ENCODE measurements at regions of chr2 and their contacts with region 1.

Region 1: GRCh38 chr2:230614913-230615332 is 97.7 kb upstream of the CAB39 start:
- DNase-seq: no peak
- ATAC-seq: no peak
- H3K4me3 ChIP-seq: no peak overlapping the region
- H3K27ac ChIP-seq: no peak overlapping the region
- H3K4me1 ChIP-seq: peaks cover 0 to 6% (median 0%) of the 10 kb centered on the region in 9 donors
- H3K27me3 ChIP-seq: peaks cover 0 to 3% (median 0%) of the 10 kb centered on the region in 7 donors
- CTCF ChIP-seq: no peak

Region 2: DNA sequence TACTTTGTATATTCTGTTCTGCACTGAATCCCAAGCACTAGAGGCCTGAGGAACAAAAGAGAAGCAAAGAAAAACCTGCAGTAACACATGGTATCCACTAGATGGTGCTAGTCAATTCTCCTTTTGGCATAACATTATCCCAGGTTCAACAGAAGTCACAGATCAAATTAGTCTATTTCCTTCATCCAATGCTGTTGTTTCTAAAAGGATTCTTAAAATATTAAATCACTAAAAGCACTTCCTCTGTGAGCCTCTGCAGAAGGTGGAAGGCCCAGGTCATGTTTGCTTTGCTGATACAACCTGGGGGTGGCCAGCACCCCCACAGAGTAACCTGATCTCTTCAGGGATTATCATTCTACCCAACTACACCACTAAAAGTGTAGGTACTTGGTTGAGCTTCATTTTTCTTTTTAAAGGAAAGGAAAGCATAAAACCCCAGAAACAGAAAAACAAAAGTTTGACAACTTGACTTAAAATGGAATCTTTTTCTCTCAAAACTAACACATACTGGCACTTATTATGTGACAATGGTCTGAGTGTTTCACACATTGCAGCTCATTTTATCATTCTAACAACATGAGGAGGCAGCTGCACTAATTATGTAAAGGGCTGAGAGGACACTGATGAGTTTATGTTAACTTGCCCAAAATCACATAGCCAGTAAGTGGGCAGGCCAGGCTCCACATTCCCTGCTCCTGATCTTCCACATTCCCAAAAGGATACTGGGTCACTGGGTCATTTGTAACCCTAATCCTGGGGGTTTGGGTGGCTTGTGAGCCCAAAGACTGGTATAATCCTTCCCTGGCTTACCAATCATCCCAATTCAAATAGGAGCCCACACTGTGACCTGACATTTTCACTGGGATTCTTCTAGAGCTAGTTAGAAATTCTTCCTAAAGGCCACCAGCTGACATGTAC is 833.8 kb before region 1 on chr2:
- intact Hi-C with region 1: loop called in 1 of 10 experiments (anchors 10 kb)
- DNase-seq: no peak
- ATAC-seq: peak; percentile 28 to 86 (median 74)
- H3K4me3 ChIP-seq: no peak overlapping the region
- H3K27ac ChIP-seq: peak overlapping the region in 1 of 10 donors; percentile 43
- H3K4me1 ChIP-seq: peaks cover 0 to 12% (median 0%) of the 10 kb centered on the region in 9 donors
- H3K27me3 ChIP-seq: no peaks in the 10 kb centered on the region
- CTCF ChIP-seq: peak; percentile 82 to 93 (median 87)

Region 3: DNA sequence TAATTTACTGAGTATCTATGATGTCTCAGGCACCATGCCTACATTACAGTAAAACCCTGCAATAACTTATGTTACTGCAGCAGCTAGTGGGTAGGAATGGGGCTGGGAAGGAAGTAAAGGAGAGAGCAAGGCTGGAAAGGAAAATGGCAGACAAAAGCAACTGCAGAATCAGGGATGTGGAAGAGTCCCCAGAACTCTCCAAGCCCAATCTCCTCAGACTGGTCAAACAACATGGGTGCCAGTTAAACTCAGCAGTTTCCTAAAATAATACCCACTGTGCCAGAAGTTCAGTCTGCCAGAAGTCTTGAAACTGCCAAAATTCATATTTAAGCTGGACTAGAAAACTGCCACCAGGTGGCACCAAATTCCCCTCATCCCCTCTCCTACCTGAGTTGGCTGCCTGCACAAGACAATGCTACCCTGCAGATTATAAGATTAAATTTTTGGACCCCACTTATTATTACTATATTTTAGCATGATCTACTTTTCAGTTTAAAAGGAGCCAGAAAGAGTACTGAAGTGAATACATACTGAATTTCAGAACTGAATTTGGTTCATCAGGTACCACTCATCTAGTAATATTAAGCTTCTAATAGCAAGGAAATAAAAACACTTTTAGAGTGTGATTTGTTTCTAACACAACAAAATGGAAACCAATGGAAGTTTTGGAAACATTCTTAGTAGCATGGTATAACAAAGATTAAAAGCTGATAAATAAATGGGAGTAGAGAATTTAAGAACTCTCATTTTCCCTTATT is 813.7 kb before region 1 on chr2:
- intact Hi-C with region 1: loop called in 1 of 10 experiments (anchors 2 kb)
- DNase-seq: peak in 1 of 2 donors; percentile 60
- ATAC-seq: peak in 7 of 8 donors; percentile 23 to 70 (median 59)
- H3K4me3 ChIP-seq: no peak overlapping the region
- H3K27ac ChIP-seq: peak overlapping the region in 1 of 10 donors; percentile 53
- H3K4me1 ChIP-seq: peaks cover 0 to 31% (median 19%) of the 10 kb centered on the region in 9 donors
- H3K27me3 ChIP-seq: no peaks in the 10 kb centered on the region
- CTCF ChIP-seq: peak; percentile 55 to 85 (median 75)

Region 4: GRCh38 chr2:230007931-230008707 is 606.8 kb before region 1 on chr2:
- intact Hi-C with region 1: loop called (anchors 1 to 5 kb)
- DNase-seq: peak; percentile 70 to 71
- ATAC-seq: peak in 6 of 8 donors; percentile 42 to 83 (median 64)
- H3K4me3 ChIP-seq: peak overlapping the region in 4 of 10 donors; percentile 10 to 27 (median 16)
- H3K27ac ChIP-seq: no peak overlapping the region
- H3K4me1 ChIP-seq: peaks cover 0 to 10% (median 5%) of the 10 kb centered on the region in 9 donors
- H3K27me3 ChIP-seq: no peaks in the 10 kb centered on the region
- CTCF ChIP-seq: peak; percentile 66 to 88 (median 86)

Region 5: DNA sequence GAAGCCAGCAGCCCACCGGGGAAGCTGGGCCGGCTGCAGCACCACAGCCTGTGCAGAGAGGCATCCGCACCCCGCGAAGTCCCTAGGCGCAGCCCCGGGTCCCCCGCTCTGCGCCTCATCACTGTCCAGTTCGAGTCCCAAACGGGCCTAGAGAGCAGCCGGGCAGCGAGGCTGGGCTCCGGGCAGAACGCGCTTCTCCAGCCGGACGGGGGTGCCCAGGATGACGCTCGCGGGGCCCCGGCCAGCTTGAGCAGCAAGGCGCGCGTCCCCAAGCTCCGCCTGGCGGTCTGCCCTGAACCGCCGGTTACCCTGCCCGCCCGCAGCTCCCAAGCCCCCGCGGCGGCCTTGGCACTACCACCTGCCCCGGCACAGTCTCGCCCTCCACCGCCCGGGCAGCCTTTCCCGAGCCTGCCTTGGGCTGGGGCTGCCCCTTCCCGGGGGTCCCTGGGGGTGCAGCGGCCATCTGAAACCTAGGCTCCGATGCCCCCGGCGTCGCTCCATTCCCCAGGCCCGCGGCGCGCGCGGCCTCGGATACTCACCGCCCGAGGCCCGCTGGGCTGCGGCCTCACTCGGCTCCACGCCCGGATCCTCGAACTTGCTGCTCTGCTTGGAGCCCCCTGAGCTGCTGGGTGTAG is 546.8 kb before region 1 on chr2:
- intact Hi-C with region 1: loop called in 3 of 10 experiments (anchors 5 kb)
- DNase-seq: peak; percentile 40 to 62
- ATAC-seq: peak; percentile 51 to 87 (median 70)
- H3K4me3 ChIP-seq: peak overlapping the region; percentile 51 to 93 (median 72)
- H3K27ac ChIP-seq: peak overlapping the region; percentile 53 to 91 (median 78)
- H3K4me1 ChIP-seq: peaks cover 0 to 24% (median 6%) of the 10 kb centered on the region in 9 donors
- H3K27me3 ChIP-seq: peaks cover 0 to 13% (median 0%) of the 10 kb centered on the region in 7 donors
- CTCF ChIP-seq: peak in 6 of 9 donors; percentile 22 to 35 (median 30)

Region 6: GRCh38 chr2:230160112-230160660 is 454.7 kb before region 1 on chr2:
- intact Hi-C with region 1: loop called in 2 of 10 experiments (anchors 5 to 10 kb)
- DNase-seq: peak; percentile 21 to 30
- ATAC-seq: peak; percentile 41 to 87 (median 71)
- H3K4me3 ChIP-seq: no peak overlapping the region
- H3K27ac ChIP-seq: no peak overlapping the region
- H3K4me1 ChIP-seq: peaks cover 0 to 8% (median 0%) of the 10 kb centered on the region in 9 donors
- H3K27me3 ChIP-seq: no peaks in the 10 kb centered on the region
- CTCF ChIP-seq: peak; percentile 68 to 90 (median 80)

Region 7: GRCh38 chr2:230166557-230167170 is 448.3 kb before region 1 on chr2:
- intact Hi-C with region 1: loop called in 2 of 10 experiments (anchors 5 to 10 kb)
- DNase-seq: no peak
- ATAC-seq: no peak
- H3K4me3 ChIP-seq: no peak overlapping the region
- H3K27ac ChIP-seq: no peak overlapping the region
- H3K4me1 ChIP-seq: peaks cover 0 to 15% (median 12%) of the 10 kb centered on the region in 9 donors
- H3K27me3 ChIP-seq: no peaks in the 10 kb centered on the region
- CTCF ChIP-seq: no peak

Region 8: GRCh38 chr2:230383453-230383852 is 231.5 kb before region 1 on chr2:
- intact Hi-C with region 1: no loop called
- DNase-seq: no peak
- ATAC-seq: no peak
- H3K4me3 ChIP-seq: no peak overlapping the region
- H3K27ac ChIP-seq: no peak overlapping the region
- H3K4me1 ChIP-seq: peaks cover 0 to 11% (median 0%) of the 10 kb centered on the region in 9 donors
- H3K27me3 ChIP-seq: no peaks in the 10 kb centered on the region
- CTCF ChIP-seq: no peak

Region 9: GRCh38 chr2:231161877-231162329 is 547.0 kb after region 1 on chr2:
- intact Hi-C with region 1: no loop called
- DNase-seq: no peak
- ATAC-seq: peak in 6 of 8 donors; percentile 33 to 83 (median 44)
- H3K4me3 ChIP-seq: no peak overlapping the region
- H3K27ac ChIP-seq: peak overlapping the region in 7 of 10 donors; percentile 5 to 73 (median 28)
- H3K4me1 ChIP-seq: peaks cover 0 to 20% (median 0%) of the 10 kb centered on the region in 9 donors
- H3K27me3 ChIP-seq: no peaks in the 10 kb centered on the region
- CTCF ChIP-seq: no peak

Measured in heart right ventricle (tissue), 16 donors.